Dorsolateral prefrontal cortex (tissue), 120 donors: ENCODE measurements at regions of chr19 and their contacts with region 1.

Region 1: GRCh38 chr19:12777217-12778016 is 2.1 kb upstream of the HOOK2 start:
- DNase-seq: peak in 9 of 10 donors; percentile 61 to 88 (median 78)
- H3K4me3 ChIP-seq: peak overlapping the region; percentile 54 to 84 (median 71)
- H3K27ac ChIP-seq: peak overlapping the region; percentile 55 to 99 (median 95)
- H3K27me3 ChIP-seq: no peaks in the 10 kb centered on the region
- CTCF ChIP-seq: peak; percentile 78 to 99 (median 96)

Region 2: DNA sequence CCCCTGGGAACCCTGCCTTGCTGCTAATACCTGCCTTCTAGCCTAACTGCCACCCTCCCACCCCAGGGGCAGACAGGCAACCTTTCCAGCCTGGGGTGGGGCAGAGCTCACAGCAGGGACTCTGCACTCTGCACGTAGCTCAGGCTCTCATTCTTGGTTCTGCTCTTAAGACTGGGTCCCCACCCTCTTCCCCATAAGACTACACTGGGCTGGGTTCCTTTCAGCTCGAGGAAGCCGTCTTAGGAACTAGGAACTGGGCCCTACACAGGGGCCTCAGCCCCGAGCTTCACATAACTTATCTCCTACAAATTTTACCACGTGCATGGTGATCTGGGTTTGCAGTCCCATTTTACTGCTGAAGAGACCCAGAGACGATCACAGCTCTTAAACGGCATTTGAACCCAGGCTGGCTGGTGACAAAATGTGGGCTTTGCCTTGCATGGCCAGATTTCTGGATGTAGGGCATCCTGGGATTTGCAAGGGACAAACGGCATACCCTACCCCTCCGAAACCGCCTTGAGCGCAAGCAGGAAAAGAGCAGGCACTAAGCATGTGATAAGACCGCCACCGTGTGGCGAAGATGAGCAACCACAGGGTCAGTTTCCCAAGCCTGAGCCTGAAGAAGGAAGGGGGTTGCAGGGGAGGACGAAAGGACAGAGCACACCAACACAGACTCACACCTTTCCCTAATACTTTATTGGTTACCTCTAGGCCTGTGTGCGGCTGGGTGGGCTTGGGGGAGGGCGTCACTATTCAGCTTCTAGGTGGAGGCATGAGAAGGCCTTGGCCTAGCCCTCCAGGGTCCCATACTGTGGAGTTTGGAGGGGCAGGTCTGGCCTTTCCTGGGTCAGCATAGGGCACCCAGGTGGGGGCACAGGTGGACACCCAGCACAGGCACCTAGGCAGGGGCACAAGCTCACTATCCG is 19.0 kb after region 1 on chr19:
- intact Hi-C with region 1: loop called (anchors 1 kb)
- DNase-seq: peak in 9 of 10 donors; percentile 67 to 86 (median 78)
- H3K4me3 ChIP-seq: peak overlapping the region in 25 of 59 donors; percentile 1 to 46 (median 26)
- H3K27ac ChIP-seq: peak overlapping the region in 50 of 59 donors; percentile 8 to 80 (median 52)
- H3K27me3 ChIP-seq: no peaks in the 10 kb centered on the region
- CTCF ChIP-seq: peak; percentile 80 to 99 (median 96)